ENCODE measurements at regions of chr6 and their contacts with region 1.

Region 1: DNA sequence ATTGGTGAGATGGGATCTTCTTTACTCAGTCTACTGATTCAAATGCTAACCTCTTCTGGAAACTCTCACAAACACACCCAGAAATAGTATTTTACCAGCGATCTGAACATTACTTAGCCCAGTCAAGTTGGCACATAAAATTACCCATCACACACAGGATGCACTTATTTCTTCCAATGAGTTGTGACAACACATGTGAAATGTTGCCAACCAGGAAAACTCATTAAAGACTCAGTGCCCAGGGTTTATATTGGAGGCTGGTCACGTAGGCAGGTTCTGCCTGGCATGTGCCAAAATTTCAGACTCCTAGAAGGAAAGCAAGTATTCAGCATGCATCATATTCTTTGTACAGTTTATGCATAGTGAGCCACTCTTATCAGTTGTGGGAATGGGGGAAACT is 443.3 kb downstream of the EPM2A start:
- DNase-seq: no peak
- H3K4me3 ChIP-seq: no peak overlapping the region
- H3K27ac ChIP-seq: no peak overlapping the region
- H3K4me1 ChIP-seq: no peaks in the 10 kb centered on the region
- H3K27me3 ChIP-seq: no peaks in the 10 kb centered on the region
- CTCF ChIP-seq: no peak
- POLR2A ChIP-seq: no peak

Region 2: GRCh38 chr6:145319605-145320004 is 27.5 kb after region 1 on chr6:
- intact Hi-C with region 1: loop called (anchors 2 kb)
- DNase-seq: no peak
- H3K4me3 ChIP-seq: no peak overlapping the region
- H3K27ac ChIP-seq: no peak overlapping the region
- H3K4me1 ChIP-seq: no peaks in the 10 kb centered on the region
- H3K27me3 ChIP-seq: no peaks in the 10 kb centered on the region
- CTCF ChIP-seq: no peak
- POLR2A ChIP-seq: no peak

Region 3: DNA sequence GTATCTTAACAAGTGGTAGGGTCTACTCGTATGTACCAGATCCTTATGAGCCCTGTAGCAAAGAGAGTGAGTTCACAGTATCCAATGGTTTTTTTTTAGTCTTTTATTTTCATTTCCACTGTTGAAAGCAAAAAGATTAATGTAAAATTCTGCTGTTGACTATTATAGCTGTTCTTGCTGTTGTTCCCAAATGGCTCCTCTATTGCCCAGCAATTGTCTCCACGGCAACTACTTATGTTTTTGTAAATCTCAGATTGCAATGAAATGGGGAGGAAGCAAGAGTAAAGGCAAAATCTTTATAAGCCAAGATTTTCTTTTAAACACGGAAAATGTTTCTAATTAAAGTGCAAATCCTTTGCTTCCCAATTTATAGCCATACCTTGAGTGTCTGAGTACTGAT is 37.2 kb after region 1 on chr6:
- intact Hi-C with region 1: loop called (anchors 1 kb)
- DNase-seq: no peak
- H3K4me3 ChIP-seq: no peak overlapping the region
- H3K27ac ChIP-seq: no peak overlapping the region
- H3K4me1 ChIP-seq: no peaks in the 10 kb centered on the region
- H3K27me3 ChIP-seq: no peaks in the 10 kb centered on the region
- CTCF ChIP-seq: no peak
- POLR2A ChIP-seq: no peak

Measured in breast epithelium (tissue), 4 donors.